Posterior vena cava (tissue), 2 donors: ENCODE measurements at regions of chr17 and their contacts with region 1.

Region 1: GRCh38 chr17:7444682-7445618 is at the start of gene CHRNB1:
- DNase-seq: peak; percentile 91
- total RNA-seq, gene CHRNB1: 7.8 to 10.5 TPM

Region 2: DNA sequence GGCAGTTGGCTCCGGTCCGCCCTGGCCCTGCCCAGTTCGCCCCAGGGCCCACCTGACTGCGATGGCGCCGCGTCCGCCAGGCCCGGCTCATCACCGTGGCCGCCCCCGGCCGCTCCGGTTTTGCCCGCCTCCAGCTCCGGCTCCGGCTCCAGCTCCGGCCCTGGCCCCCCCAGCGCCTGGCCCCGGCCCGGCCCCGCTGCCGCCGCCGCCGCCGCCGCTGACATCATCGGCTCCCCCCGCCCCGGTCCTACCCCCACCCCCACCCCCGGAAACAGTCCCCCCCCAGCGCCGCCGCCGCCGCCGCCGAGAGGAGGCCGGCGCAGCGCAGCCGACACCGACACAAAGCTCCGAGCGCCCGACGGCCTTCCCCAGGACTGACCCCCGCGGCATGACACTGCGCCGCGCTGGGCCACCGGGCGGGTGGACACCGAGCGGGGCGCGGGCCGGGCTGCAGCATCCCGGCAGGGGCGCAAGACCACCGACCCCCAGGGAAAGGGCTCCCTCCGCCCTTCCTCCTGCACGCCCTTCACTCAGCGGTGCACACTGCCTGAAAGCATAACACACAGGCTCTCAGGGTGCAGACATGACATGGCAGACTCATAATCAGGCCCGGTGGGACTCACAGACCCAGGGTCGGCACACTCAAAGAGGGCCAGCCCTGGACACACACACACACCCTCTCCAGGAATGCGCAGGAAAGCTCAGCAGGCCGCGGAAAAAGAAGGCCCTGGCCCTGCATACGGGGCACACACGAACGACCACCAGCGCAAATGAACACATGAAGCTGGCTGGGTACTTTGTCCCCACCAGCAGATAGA is 34.7 kb after region 1 on chr17 and contains the start of gene ZBTB4:
- intact Hi-C with region 1: loop called in 1 of 2 experiments (anchors 5 kb)
- DNase-seq: peak; percentile 89
- total RNA-seq, gene ZBTB4: 67.3 to 67.9 TPM

Region 3: GRCh38 chr17:7695586-7695985 is 250.6 kb after region 1 on chr17:
- intact Hi-C with region 1: no loop called
- DNase-seq: no peak